Activated CD4-positive, alpha-beta T cell treated with anti-CD3 and anti-CD28 coated beads for 36 hours (primary cell): ENCODE measurements at regions of chr13 and their contacts with region 1.

Region 1: DNA sequence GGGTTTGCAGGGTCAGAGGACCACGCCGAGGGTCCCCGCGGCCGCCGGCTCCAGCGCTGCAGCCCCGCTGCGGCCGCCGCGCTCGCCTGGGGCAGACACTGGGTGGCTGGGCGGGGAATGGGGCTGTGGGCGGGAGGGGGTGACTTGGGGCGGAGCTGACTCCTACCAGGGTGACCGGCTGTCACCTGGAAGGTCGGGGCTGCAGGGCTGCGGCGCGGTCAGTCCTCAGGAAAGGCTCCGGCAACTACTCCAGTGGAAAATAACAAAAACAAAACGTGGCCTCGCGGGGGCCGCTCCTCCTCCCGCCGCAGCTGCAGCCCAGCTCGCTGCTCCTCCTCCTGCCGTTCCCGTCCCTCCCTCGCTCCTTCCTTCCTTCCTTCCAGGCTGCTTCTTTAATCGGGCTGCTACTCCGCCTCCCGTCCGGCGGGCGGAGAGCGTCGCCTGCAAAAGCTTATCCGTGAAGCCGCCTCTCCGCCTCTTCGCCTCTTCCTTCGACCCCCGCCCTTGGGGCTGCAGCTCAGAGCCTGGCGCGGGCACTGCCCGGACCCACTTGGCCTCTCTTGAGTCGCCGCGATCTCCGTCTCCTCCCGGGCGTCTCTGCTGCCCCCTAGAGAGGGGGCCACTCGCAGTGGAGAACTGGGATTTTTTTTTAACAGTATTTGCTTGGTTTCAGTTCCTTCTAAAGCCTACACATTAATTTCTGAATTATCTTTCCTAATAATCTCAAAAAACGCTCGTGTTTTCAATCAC is at the start of gene TBC1D4:
- DNase-seq: peak; percentile 80
- ATAC-seq: peak; percentile 74
- H3K4me3 Mint-ChIP-seq: peak within 1 kb of the TSS; percentile 85
- H3K27ac Mint-ChIP-seq: peak within 1 kb of the TSS; percentile 33
- H3K4me1 Mint-ChIP-seq: peaks cover 20% of the 10 kb centered on the region
- H3K27me3 Mint-ChIP-seq: peaks cover 44% of the 10 kb centered on the region
- total RNA-seq, gene TBC1D4: 29.4 to 31.7 TPM

Region 2: DNA sequence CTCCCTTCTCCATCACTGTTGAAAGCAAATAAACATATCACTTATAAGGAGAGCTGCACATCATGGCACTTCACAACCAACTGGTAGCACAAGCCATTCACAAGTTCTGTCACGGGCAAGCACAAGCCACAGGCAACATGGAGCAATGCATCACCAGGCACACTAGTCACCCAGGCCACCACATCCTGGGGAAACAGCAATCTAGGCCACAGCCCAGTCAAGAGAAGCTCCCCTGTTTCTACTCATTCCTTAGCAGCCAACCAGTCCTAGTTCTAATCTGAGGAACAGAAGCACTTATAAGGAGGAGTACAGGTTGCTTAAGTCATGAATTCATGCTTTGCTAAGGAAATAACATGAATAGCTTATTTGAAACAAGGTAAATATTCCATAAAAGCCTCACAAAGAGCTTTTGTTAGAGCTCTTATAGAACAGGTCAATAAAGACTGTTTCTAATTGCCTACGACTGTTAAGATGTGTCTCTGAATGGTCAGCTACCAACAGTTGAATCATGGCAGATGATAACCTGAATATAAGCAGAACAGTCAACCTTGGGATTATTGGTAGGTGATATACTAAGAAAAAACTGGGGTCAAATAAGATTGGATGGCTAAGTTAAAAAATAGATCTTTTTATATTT is 169.2 kb before region 1 on chr13:
- CTCF ChIA-PET with region 1: no interaction called
- POLR2A ChIA-PET with region 1: no interaction called
- intact Hi-C with region 1: loop called in 1 of 2 experiments (anchors 5 kb)
- DNase-seq: peak; percentile 81
- ATAC-seq: peak; percentile 92
- H3K4me3 Mint-ChIP-seq: no peak overlapping the region
- H3K27ac Mint-ChIP-seq: peak overlapping the region; percentile 64
- H3K4me1 Mint-ChIP-seq: peaks cover 65% of the 10 kb centered on the region
- H3K27me3 Mint-ChIP-seq: no peaks in the 10 kb centered on the region

Region 3: GRCh38 chr13:75372517-75372916 is 109.7 kb before region 1 on chr13:
- CTCF ChIA-PET with region 1: interaction called, 7 read pairs
- POLR2A ChIA-PET with region 1: no interaction called
- intact Hi-C with region 1: loop called (anchors 2 to 5 kb)
- DNase-seq: no peak
- ATAC-seq: peak; percentile 71
- H3K4me3 Mint-ChIP-seq: no peak overlapping the region
- H3K27ac Mint-ChIP-seq: no peak overlapping the region
- H3K4me1 Mint-ChIP-seq: peaks cover 6% of the 10 kb centered on the region
- H3K27me3 Mint-ChIP-seq: no peaks in the 10 kb centered on the region

Region 4: DNA sequence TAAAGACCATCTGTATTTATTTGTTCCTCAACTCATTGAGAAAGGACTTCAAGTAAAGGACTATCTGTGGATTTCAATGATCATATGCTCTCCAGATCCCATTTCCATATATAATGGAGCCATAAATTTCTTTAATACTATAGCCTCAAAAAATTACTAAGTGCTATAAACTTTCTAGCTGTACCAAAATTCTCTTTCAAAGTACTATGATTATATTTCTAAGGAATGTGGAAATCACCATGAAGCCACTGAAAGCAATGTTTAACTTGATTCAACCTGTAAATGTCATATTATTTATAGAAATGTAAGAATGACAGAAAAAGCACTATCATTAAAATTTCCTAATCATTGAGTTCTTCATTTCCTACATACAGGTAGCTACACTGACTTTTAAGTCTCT is 20.9 kb before region 1 on chr13:
- CTCF ChIA-PET with region 1: no interaction called
- POLR2A ChIA-PET with region 1: no interaction called
- intact Hi-C with region 1: no loop called
- DNase-seq: no peak
- ATAC-seq: no peak
- H3K4me3 Mint-ChIP-seq: no peak overlapping the region
- H3K27ac Mint-ChIP-seq: no peak overlapping the region
- H3K4me1 Mint-ChIP-seq: no peaks in the 10 kb centered on the region
- H3K27me3 Mint-ChIP-seq: peaks cover 16% of the 10 kb centered on the region

Region 5: GRCh38 chr13:75537401-75538365 is 55.4 kb after region 1 on chr13 and contains the start of gene COMMD6:
- CTCF ChIA-PET with region 1: interaction called, 9 read pairs
- POLR2A ChIA-PET with region 1: no interaction called
- intact Hi-C with region 1: loop called in 1 of 2 experiments (anchors 1 kb)
- DNase-seq: peak; percentile 89
- ATAC-seq: peak; percentile 96
- H3K4me3 Mint-ChIP-seq: peak within 1 kb of the TSS; percentile 100
- H3K27ac Mint-ChIP-seq: peak within 1 kb of the TSS; percentile 96
- H3K4me1 Mint-ChIP-seq: peaks cover 46% of the 10 kb centered on the region
- H3K27me3 Mint-ChIP-seq: no peaks in the 10 kb centered on the region
- total RNA-seq, gene COMMD6: 103 to 121 TPM

Region 6: DNA sequence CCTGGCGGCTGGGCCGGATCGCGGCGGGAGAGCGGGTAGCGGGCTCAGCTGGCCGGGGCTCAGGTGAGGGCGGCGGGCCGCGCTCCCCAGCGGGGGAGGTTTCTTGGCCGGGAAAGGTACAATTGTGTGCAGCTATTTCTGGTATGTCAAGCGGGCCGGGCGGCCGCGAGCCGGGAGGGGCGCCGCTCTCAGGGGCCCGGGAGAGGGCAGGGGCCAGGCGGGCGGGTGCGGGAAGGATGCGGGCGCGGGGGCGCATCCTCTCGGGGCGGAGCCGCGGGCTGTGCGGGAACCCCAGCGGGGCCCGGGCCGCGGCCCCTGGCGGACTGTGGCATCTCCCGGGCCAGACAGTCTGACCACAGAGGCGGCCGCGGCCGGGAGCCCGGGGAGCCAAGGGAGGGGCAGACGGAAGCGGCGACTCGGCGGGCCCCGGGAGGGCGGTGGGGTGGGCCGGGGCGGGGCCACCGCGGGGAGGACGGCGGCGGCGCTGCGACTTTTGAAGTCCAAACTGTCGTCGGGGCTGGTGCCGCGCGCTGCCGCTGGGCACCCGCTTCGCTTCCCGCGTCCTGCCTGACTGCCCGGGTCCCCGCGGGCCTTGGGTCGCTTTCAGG is 153.7 kb after region 1 on chr13 and contains the start of gene LMO7:
- CTCF ChIA-PET with region 1: no interaction called
- POLR2A ChIA-PET with region 1: no interaction called
- intact Hi-C with region 1: loop called in 1 of 2 experiments (anchors 2 kb)
- DNase-seq: peak; percentile 63
- ATAC-seq: peak; percentile 49
- H3K4me3 Mint-ChIP-seq: peak within 1 kb of the TSS; percentile 69
- H3K27ac Mint-ChIP-seq: no peak within 1 kb of the TSS
- H3K4me1 Mint-ChIP-seq: peaks cover 13% of the 10 kb centered on the region
- H3K27me3 Mint-ChIP-seq: peaks cover 18% of the 10 kb centered on the region
- total RNA-seq, gene LMO7: 11.7 to 15.5 TPM

Region 7: GRCh38 chr13:75818179-75818967 is 336.1 kb after region 1 on chr13:
- CTCF ChIA-PET with region 1: no interaction called
- POLR2A ChIA-PET with region 1: no interaction called
- intact Hi-C with region 1: no loop called
- DNase-seq: no peak
- ATAC-seq: no peak
- H3K4me3 Mint-ChIP-seq: no peak overlapping the region
- H3K27ac Mint-ChIP-seq: no peak overlapping the region
- H3K4me1 Mint-ChIP-seq: no peaks in the 10 kb centered on the region
- H3K27me3 Mint-ChIP-seq: no peaks in the 10 kb centered on the region